Caco-2 (cell line): ENCODE measurements at regions of chr12 and their contacts with region 1.

Region 1: DNA sequence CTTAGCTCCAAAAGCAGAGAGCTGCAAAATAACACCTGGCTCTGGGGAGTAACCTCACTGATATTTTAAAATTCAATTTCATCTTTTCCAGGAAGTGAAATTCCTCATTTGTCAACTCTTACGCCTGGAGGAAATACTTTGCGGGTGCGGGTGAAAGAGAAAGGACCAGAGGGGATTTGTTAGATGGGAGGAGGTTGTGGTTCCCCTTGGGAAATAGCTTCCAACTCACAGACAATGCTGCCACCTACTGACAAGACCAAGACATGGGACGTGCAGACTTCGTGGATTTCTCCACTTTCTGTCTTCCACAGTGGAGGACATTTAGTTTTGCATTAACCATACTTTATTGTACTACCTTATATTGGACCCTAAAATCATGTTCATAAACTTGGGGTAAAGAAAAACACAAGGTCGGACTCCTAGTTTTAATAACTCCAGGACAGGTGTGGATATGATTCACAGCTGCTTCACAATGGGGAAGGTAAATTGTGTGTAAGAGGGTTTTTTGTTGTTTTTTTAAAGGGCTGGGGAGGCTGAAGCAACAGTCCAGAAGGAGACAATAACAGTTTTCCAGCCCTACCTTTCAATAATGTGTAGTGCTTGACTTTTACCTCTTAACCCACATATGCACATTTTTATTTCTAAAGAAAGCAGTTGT is 10.8 kb downstream of the FBXL14 start:
- DNase-seq: peak; percentile 82 to 87
- H3K4me3 ChIP-seq: no peak overlapping the region
- H3K4me3 Mint-ChIP-seq: no peak overlapping the region
- H3K27ac Mint-ChIP-seq: no peak overlapping the region
- H3K4me1 ChIP-seq: no peaks in the 10 kb centered on the region
- H3K4me1 Mint-ChIP-seq: peaks cover 3% of the 10 kb centered on the region
- H3K27me3 ChIP-seq: no peaks in the 10 kb centered on the region
- H3K27me3 Mint-ChIP-seq: no peaks in the 10 kb centered on the region
- CTCF ChIP-seq: peak; percentile 88 to 99

Region 2: GRCh38 chr12:1279050-1279449 is 304.5 kb before region 1 on chr12:
- CTCF ChIA-PET with region 1: no interaction called
- POLR2A ChIA-PET with region 1: no interaction called
- intact Hi-C with region 1: loop called (anchors 10 kb)
- DNase-seq: no peak
- H3K4me3 ChIP-seq: no peak overlapping the region
- H3K4me3 Mint-ChIP-seq: no peak overlapping the region
- H3K27ac Mint-ChIP-seq: no peak overlapping the region
- H3K4me1 ChIP-seq: peaks cover 10% of the 10 kb centered on the region; the same call in 1 of the 2 replicates
- H3K4me1 Mint-ChIP-seq: peaks cover 14% of the 10 kb centered on the region
- H3K27me3 ChIP-seq: no peaks in the 10 kb centered on the region
- H3K27me3 Mint-ChIP-seq: no peaks in the 10 kb centered on the region
- CTCF ChIP-seq: peak in 1 of 2 experiments; percentile 13

Region 3: GRCh38 chr12:1380171-1380974 is 203.2 kb before region 1 on chr12:
- CTCF ChIA-PET with region 1: no interaction called
- POLR2A ChIA-PET with region 1: no interaction called
- intact Hi-C with region 1: no loop called
- DNase-seq: no peak
- H3K4me3 ChIP-seq: no peak overlapping the region
- H3K4me3 Mint-ChIP-seq: no peak overlapping the region
- H3K27ac Mint-ChIP-seq: no peak overlapping the region
- H3K4me1 ChIP-seq: no peaks in the 10 kb centered on the region
- H3K4me1 Mint-ChIP-seq: no peaks in the 10 kb centered on the region
- H3K27me3 ChIP-seq: no peaks in the 10 kb centered on the region
- H3K27me3 Mint-ChIP-seq: no peaks in the 10 kb centered on the region
- CTCF ChIP-seq: no peak

Region 4: DNA sequence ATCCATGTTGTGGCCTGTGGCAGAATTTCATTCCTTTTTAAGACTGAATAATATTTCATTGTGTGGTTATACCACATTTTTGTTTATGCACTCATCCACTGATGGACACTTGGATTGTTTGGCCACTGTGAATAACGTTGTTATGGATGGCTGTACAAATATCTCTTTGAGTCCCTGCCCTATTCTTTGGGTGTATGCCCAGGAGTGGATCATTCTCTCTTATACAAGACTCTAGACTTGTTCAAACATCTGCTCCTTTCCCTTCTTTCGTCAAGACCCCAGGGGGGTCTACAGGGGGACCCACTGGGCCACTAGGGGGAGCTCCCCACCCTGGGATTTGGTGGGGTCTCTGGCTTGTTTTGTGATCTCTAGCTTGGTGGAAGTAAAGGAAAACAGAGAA is 66.5 kb before region 1 on chr12:
- CTCF ChIA-PET with region 1: interaction called, 6 read pairs
- POLR2A ChIA-PET with region 1: no interaction called
- intact Hi-C with region 1: loop called (anchors 2 kb)
- DNase-seq: peak in 1 of 2 experiments; percentile 58
- H3K4me3 ChIP-seq: no peak overlapping the region
- H3K4me3 Mint-ChIP-seq: no peak overlapping the region
- H3K27ac Mint-ChIP-seq: no peak overlapping the region
- H3K4me1 ChIP-seq: peaks cover 15% of the 10 kb centered on the region
- H3K4me1 Mint-ChIP-seq: peaks cover 12% of the 10 kb centered on the region
- H3K27me3 ChIP-seq: no peaks in the 10 kb centered on the region; the same call in 1 of the 2 replicates
- H3K27me3 Mint-ChIP-seq: peaks cover 6% of the 10 kb centered on the region
- CTCF ChIP-seq: peak; percentile 71 to 83

Region 5: DNA sequence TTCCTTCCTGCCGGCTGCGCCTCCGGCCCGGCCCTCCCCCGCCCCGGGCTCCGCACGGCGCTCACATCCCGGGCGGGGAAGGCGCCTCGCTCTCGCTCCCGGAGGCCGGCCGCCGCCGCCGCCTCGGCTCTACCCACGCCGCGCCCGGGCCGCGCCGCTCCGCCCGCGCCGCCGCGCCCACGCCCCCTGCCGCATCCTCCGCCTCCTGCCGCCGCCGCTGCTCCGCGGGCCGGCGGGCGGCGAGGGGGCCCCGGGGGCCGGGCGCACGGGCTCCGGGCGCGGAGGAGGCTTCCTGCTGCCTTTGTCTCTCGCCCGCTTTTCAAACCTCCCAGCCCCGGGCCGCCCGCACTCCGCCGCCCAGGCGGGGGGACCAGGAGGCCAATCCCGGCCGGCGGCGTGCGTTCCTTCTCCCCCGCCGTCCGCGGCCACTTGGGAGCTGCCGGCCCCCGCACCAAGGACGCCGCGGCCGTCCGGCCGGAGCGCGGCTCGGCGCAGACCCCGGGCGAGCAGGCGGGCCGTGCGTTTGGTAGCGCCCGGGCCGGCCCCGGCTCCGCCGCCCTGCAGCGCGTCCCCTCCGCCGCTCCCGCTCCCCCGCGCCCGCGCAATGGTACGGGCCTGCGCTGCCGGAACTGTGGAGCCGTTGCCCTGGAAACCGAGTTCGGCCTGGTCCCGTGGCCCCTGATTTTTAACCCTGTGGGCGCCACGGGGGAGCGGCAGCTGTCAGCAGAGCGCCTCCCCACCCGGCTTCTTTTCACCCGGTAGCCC is 10.9 kb after region 1 on chr12 and contains the start of gene FBXL14:
- CTCF ChIA-PET with region 1: interaction called, 13 read pairs
- POLR2A ChIA-PET with region 1: no interaction called
- intact Hi-C with region 1: no loop called
- DNase-seq: peak; percentile 96 to 99
- H3K4me3 ChIP-seq: peak within 1 kb of the TSS; percentile 51
- H3K4me3 Mint-ChIP-seq: peak within 1 kb of the TSS; percentile 89
- H3K27ac Mint-ChIP-seq: peak within 1 kb of the TSS; percentile 91
- H3K4me1 ChIP-seq: peaks cover 34% of the 10 kb centered on the region
- H3K4me1 Mint-ChIP-seq: peaks cover 37% of the 10 kb centered on the region
- H3K27me3 ChIP-seq: no peaks in the 10 kb centered on the region
- H3K27me3 Mint-ChIP-seq: no peaks in the 10 kb centered on the region
- CTCF ChIP-seq: no peak
- total RNA-seq, gene FBXL14: 23.6 and 25.5 TPM in 2 replicates

Region 6: DNA sequence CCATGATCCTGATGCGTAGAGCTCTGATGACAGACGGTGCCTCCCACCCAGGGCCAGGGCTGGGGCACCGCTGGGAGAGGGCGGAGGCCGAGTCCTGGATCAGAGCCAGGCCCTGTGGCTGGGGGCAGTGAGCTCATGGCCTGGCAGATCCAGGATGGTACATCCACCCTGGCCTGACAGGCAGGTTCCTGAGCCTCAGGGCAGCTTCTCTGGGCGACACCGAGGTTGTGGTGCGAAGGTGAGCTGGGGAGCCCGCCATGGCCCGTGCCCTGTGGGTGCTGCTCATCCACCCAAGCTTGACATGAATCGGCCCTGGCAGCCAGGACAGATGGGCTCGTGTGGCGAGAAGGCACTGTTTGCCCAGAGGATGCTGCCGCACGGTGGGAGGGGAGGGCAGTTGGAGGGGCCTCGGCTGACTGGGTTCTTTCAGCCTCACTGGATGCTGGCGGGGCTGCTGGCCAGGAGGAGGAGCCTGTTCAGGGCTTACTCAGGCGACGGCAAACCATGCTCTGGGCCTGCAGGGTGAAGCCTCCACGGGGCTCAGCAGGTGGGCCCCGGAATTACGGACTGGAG is 253.4 kb after region 1 on chr12:
- CTCF ChIA-PET with region 1: no interaction called
- POLR2A ChIA-PET with region 1: no interaction called
- intact Hi-C with region 1: no loop called
- DNase-seq: no peak
- H3K4me3 ChIP-seq: no peak overlapping the region
- H3K4me3 Mint-ChIP-seq: no peak overlapping the region
- H3K27ac Mint-ChIP-seq: no peak overlapping the region
- H3K4me1 ChIP-seq: peaks cover 11% of the 10 kb centered on the region
- H3K4me1 Mint-ChIP-seq: peaks cover 12% of the 10 kb centered on the region
- H3K27me3 ChIP-seq: no peaks in the 10 kb centered on the region; the same call in none of the 2 replicates
- H3K27me3 Mint-ChIP-seq: peaks cover 22% of the 10 kb centered on the region
- CTCF ChIP-seq: no peak